ENCODE measurements at regions of chr4 and their contacts with region 1.

Region 1: DNA sequence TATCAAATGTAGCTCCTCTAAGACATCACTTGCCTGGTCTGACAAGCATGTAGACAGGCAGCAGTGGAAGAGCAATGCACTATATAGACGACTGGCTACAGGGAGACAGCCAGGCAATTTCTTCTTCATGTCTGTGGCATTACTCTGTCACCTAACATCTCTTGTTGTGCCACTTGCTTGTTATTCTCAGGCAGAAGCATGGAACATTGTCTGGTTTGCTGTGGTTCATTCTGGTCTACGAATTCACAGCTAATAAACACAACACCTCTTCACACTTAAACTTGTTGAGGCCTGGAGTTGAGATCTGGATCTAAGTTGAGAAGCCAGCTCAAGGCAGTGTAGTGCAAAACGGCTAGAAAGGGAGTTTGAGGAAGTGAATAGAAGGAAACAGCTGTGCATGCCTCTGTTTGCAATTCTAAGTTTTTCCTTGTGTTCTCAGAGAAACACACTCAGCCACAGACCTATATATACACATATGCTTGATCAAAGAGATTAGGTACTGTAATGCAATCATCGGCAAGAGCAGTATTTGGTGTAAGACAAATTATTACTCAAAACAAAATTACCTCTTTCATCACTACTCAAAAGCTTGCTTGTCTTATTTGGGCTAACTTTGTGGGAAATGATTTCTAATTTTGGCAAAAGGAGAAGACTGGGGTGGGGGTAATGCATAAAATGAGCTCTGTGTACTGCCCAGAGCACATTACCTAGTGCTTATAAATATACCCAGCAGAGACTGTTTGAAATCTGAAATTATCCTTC is 243.8 kb downstream of the PPP3CA start:
- DNase-seq: peak; percentile 58
- H3K4me3 Mint-ChIP-seq: no peak overlapping the region
- H3K27ac Mint-ChIP-seq: peak overlapping the region; percentile 45
- H3K4me1 Mint-ChIP-seq: peaks cover 21% of the 10 kb centered on the region
- H3K27me3 Mint-ChIP-seq: no peaks in the 10 kb centered on the region

Region 2: GRCh38 chr4:100823066-100823992 is 280.2 kb before region 1 on chr4:
- intact Hi-C with region 1: loop called (anchors 2 kb)
- DNase-seq: peak; percentile 65
- H3K4me3 Mint-ChIP-seq: no peak overlapping the region
- H3K27ac Mint-ChIP-seq: peak overlapping the region; percentile 86
- H3K4me1 Mint-ChIP-seq: peaks cover 19% of the 10 kb centered on the region
- H3K27me3 Mint-ChIP-seq: no peaks in the 10 kb centered on the region

Region 3: DNA sequence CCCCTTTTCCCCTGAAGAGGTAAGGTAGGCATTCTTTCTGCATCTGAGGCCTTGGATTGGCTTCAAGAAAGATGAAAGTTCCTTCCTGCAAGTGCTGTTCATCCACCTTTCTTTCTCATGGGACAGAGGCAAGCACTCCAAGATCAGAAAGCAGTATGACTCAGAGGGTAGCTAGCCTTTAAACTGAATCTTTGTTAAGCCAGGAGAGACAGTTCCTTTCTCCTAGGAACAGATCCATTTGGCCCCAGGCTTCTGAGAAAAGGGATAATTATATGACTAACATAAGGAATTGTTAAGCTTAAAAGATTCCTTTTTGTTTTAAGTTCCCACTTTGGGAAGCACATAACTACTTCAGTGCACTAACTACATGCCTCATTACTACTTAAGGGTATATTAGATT is 51.8 kb after region 1 on chr4:
- intact Hi-C with region 1: loop called (anchors 1 kb)
- DNase-seq: no peak
- H3K4me3 Mint-ChIP-seq: no peak overlapping the region
- H3K27ac Mint-ChIP-seq: no peak overlapping the region
- H3K4me1 Mint-ChIP-seq: peaks cover 22% of the 10 kb centered on the region
- H3K27me3 Mint-ChIP-seq: no peaks in the 10 kb centered on the region